ENCODE measurements at regions of chr6 and their contacts with region 1.

Region 1: DNA sequence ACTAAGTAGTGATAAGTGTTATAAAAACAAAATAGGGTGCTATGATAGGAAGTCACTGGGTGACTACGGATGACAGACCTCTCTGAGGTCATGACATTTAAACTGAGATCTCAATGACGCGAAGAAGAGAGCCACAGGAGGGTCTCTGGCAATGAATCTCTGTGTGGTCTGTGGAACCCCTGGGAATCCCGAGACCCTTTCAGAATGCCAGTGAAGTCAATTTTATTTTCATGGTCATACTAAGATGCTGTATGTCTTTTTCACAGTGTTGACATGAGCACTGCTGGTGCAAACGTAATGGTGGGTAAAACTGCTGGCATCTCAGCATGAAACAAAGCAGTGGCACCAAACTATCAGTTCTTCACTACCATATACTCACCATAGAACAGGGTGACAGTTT is 155.0 kb downstream of the GJA10 start:
- DNase-seq: no peak
- H3K4me3 Mint-ChIP-seq: no peak overlapping the region
- H3K27ac Mint-ChIP-seq: peak overlapping the region; percentile 86
- H3K4me1 Mint-ChIP-seq: peaks cover 59% of the 10 kb centered on the region
- H3K27me3 Mint-ChIP-seq: no peaks in the 10 kb centered on the region

Region 2: GRCh38 chr6:89859744-89860143 is 189.6 kb before region 1 on chr6:
- CTCF ChIA-PET with region 1: no interaction called
- intact Hi-C with region 1: no loop called
- DNase-seq: no peak
- H3K4me3 Mint-ChIP-seq: no peak overlapping the region
- H3K27ac Mint-ChIP-seq: no peak overlapping the region
- H3K4me1 Mint-ChIP-seq: peaks cover 3% of the 10 kb centered on the region
- H3K27me3 Mint-ChIP-seq: no peaks in the 10 kb centered on the region

Region 3: GRCh38 chr6:90025523-90026061 is 23.7 kb before region 1 on chr6:
- CTCF ChIA-PET with region 1: interaction called, 3 read pairs
- intact Hi-C with region 1: loop called (anchors 1 kb)
- DNase-seq: peak; percentile 85
- H3K4me3 Mint-ChIP-seq: peak overlapping the region; percentile 47
- H3K27ac Mint-ChIP-seq: peak overlapping the region; percentile 87
- H3K4me1 Mint-ChIP-seq: peaks cover 93% of the 10 kb centered on the region
- H3K27me3 Mint-ChIP-seq: no peaks in the 10 kb centered on the region

Region 4: DNA sequence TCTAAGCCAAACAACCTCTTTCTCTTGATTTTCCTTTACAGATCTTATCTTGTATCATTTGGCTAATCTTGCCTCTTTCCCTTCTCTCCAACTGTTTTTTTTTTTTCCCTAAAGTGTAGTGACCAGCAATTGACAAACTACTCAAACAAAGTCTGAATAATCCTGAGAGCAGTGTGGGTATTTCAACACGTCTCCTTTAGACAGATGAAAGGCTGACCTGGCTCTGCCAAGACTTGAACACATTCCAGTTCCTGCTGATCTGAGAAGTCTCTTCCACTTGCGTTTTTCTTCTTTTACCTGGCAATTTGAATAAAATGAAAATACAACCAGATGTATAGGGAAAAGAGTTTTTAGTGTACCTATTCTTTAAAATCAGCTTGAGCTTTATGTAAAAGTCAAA is 13.4 kb after region 1 on chr6:
- CTCF ChIA-PET with region 1: interaction called, 10 read pairs
- intact Hi-C with region 1: loop called (anchors 2 kb)
- DNase-seq: no peak
- H3K4me3 Mint-ChIP-seq: no peak overlapping the region
- H3K27ac Mint-ChIP-seq: no peak overlapping the region
- H3K4me1 Mint-ChIP-seq: peaks cover 40% of the 10 kb centered on the region
- H3K27me3 Mint-ChIP-seq: no peaks in the 10 kb centered on the region

Region 5: DNA sequence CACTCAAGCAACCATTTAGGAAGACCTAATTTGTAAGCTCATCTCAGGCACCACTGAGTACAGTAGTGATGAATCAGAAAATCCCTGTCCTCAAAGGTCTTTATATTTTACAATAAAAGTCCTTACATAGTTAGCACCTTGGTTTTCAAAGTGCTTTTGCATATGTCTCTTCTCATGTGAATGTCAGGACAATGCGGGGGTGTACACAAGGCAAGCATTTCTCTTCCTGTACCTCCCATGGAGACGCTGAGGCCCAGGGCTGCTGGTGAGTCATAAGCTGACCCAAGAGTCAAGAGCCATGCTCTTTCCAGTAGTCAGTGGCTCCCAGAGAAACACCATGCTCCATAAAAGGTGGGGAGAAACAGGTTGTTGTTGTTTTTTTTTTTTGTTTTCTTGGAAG is 19.0 kb after region 1 on chr6:
- CTCF ChIA-PET with region 1: interaction called, 4 read pairs
- intact Hi-C with region 1: loop called (anchors 1 kb)
- DNase-seq: peak; percentile 75
- H3K4me3 Mint-ChIP-seq: no peak overlapping the region
- H3K27ac Mint-ChIP-seq: peak overlapping the region; percentile 87
- H3K4me1 Mint-ChIP-seq: peaks cover 88% of the 10 kb centered on the region
- H3K27me3 Mint-ChIP-seq: no peaks in the 10 kb centered on the region

Region 6: GRCh38 chr6:90103056-90103800 is 53.9 kb after region 1 on chr6:
- CTCF ChIA-PET with region 1: interaction called, 5 read pairs
- intact Hi-C with region 1: loop called (anchors 1 kb)
- DNase-seq: peak; percentile 53
- H3K4me3 Mint-ChIP-seq: peak overlapping the region; percentile 45
- H3K27ac Mint-ChIP-seq: peak overlapping the region; percentile 79
- H3K4me1 Mint-ChIP-seq: peaks cover 93% of the 10 kb centered on the region
- H3K27me3 Mint-ChIP-seq: no peaks in the 10 kb centered on the region

Region 7: GRCh38 chr6:90123831-90124230 is 74.5 kb after region 1 on chr6:
- CTCF ChIA-PET with region 1: no interaction called
- intact Hi-C with region 1: no loop called
- DNase-seq: peak; percentile 69
- H3K4me3 Mint-ChIP-seq: no peak overlapping the region
- H3K27ac Mint-ChIP-seq: peak overlapping the region; percentile 81
- H3K4me1 Mint-ChIP-seq: peaks cover 83% of the 10 kb centered on the region
- H3K27me3 Mint-ChIP-seq: no peaks in the 10 kb centered on the region